T-cell (primary cell): ENCODE measurements at regions of chr12 and their contacts with region 1.

Region 1: GRCh38 chr12:75505706-75506312 is 5.6 kb downstream of the KRR1 start:
- DNase-seq: peak in 1 of 35 experiments; percentile 57
- ATAC-seq: peak in 3 of 4 experiments; percentile 47 to 56 (median 51)
- H3K4me3 ChIP-seq: no peak overlapping the region
- H3K4me3 Mint-ChIP-seq: no peak overlapping the region
- H3K27ac ChIP-seq: no peak overlapping the region
- H3K27ac Mint-ChIP-seq: peak overlapping the region in 1 of 2 donors; percentile 25
- H3K4me1 ChIP-seq: peaks cover 4 to 10% of the 10 kb centered on the region in 2 experiments
- H3K4me1 Mint-ChIP-seq: peaks cover 23 to 35% (median 29%) of the 10 kb centered on the region in 3 donors
- H3K27me3 ChIP-seq: no peaks in the 10 kb centered on the region
- H3K27me3 Mint-ChIP-seq: no peaks in the 10 kb centered on the region

Region 2: GRCh38 chr12:75334384-75335030 is 171.3 kb before region 1 on chr12 and contains the start of gene GLIPR1L1:
- CTCF ChIA-PET with region 1: interaction called, 17 to 18 read pairs
- POLR2A ChIA-PET with region 1: interaction called, 3 read pairs
- DNase-seq: peak; percentile 52 to 90 (median 74)
- ATAC-seq: peak; percentile 81 to 90 (median 86)
- H3K4me3 ChIP-seq: peak within 1 kb of the TSS; percentile 28 to 45
- H3K4me3 Mint-ChIP-seq: peak within 1 kb of the TSS; percentile 55 to 71 (median 66)
- H3K27ac ChIP-seq: no peak within 1 kb of the TSS
- H3K27ac Mint-ChIP-seq: no peak within 1 kb of the TSS
- H3K4me1 ChIP-seq: peaks cover 2 to 16% of the 10 kb centered on the region in 2 experiments
- H3K4me1 Mint-ChIP-seq: peaks cover 18 to 21% (median 19%) of the 10 kb centered on the region in 3 donors
- H3K27me3 ChIP-seq: peaks cover 4 to 12% of the 10 kb centered on the region in 2 experiments
- H3K27me3 Mint-ChIP-seq: peaks cover 15 to 19% of the 10 kb centered on the region in 2 donors
- total RNA-seq, gene GLIPR1L1: not detected

Region 3: GRCh38 chr12:75437564-75437963 is 68.2 kb before region 1 on chr12:
- CTCF ChIA-PET with region 1: interaction called, 4 to 13 read pairs
- POLR2A ChIA-PET with region 1: no interaction called
- DNase-seq: peak in 10 of 35 experiments; percentile 1 to 65 (median 10)
- ATAC-seq: peak; percentile 48 to 82 (median 75)
- H3K4me3 ChIP-seq: no peak overlapping the region
- H3K4me3 Mint-ChIP-seq: no peak overlapping the region
- H3K27ac ChIP-seq: no peak overlapping the region
- H3K27ac Mint-ChIP-seq: no peak overlapping the region
- H3K4me1 ChIP-seq: peaks cover 0 to 12% of the 10 kb centered on the region in 2 experiments
- H3K4me1 Mint-ChIP-seq: peaks cover 0 to 16% (median 5%) of the 10 kb centered on the region in 3 donors
- H3K27me3 ChIP-seq: peaks cover 0 to 7% of the 10 kb centered on the region in 2 experiments
- H3K27me3 Mint-ChIP-seq: peaks cover 4 to 12% of the 10 kb centered on the region in 2 donors

Region 4: GRCh38 chr12:75489613-75490210 is 16.1 kb before region 1 on chr12:
- CTCF ChIA-PET with region 1: interaction called, 44 to 58 read pairs
- POLR2A ChIA-PET with region 1: interaction called, 7 to 10 read pairs
- DNase-seq: no peak
- ATAC-seq: peak in 3 of 4 experiments; percentile 61 to 70 (median 61)
- H3K4me3 ChIP-seq: no peak overlapping the region
- H3K4me3 Mint-ChIP-seq: peak overlapping the region in 1 of 3 donors; percentile 11
- H3K27ac ChIP-seq: no peak overlapping the region
- H3K27ac Mint-ChIP-seq: peak overlapping the region; percentile 71 to 81
- H3K4me1 ChIP-seq: peaks cover 2 to 9% of the 10 kb centered on the region in 2 experiments
- H3K4me1 Mint-ChIP-seq: peaks cover 13 to 68% (median 61%) of the 10 kb centered on the region in 3 donors
- H3K27me3 ChIP-seq: no peaks in the 10 kb centered on the region
- H3K27me3 Mint-ChIP-seq: no peaks in the 10 kb centered on the region